Aorta (tissue), 5 donors: ENCODE measurements at regions of chr9 and their contacts with region 1.

Region 1: GRCh38 chr9:4489919-4490704 is at the start of gene SLC1A1:
- DNase-seq: peak; percentile 85 to 88
- ATAC-seq: peak; percentile 93
- H3K4me3 ChIP-seq: peak within 1 kb of the TSS; percentile 33 to 58
- H3K27ac ChIP-seq: peak within 1 kb of the TSS; percentile 21 to 61
- H3K4me1 ChIP-seq: no peaks in the 10 kb centered on the region
- H3K27me3 ChIP-seq: no peaks in the 10 kb centered on the region
- total RNA-seq, gene SLC1A1: 3.0 to 3.2 TPM

Region 2: DNA sequence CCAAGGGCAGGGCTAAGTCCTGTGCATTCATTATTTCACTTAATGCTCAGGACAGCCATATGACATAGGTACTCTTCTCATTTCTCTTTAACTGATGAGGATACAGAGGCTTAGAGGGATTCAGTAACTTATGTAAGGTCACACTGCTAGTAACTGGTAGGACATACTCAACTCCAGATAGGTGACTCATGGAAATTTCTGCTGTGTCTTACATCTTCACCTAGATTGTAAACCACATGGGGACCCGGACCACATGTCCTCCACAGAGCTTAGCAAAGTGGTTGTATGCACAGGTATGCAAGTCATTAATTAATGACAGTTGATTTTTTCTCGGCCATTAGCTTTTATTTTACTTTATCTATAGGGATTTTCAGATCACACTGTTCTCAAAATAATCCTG is 29.5 kb after region 1 on chr9:
- intact Hi-C with region 1: no loop called
- DNase-seq: no peak
- ATAC-seq: no peak
- H3K4me3 ChIP-seq: no peak overlapping the region
- H3K27ac ChIP-seq: no peak overlapping the region
- H3K4me1 ChIP-seq: no peaks in the 10 kb centered on the region
- H3K27me3 ChIP-seq: no peaks in the 10 kb centered on the region

Region 3: GRCh38 chr9:4548811-4549725 is 59.0 kb after region 1 on chr9:
- intact Hi-C with region 1: loop called in 1 of 2 experiments (anchors 10 kb)
- DNase-seq: no peak
- ATAC-seq: no peak
- H3K4me3 ChIP-seq: no peak overlapping the region
- H3K27ac ChIP-seq: no peak overlapping the region
- H3K4me1 ChIP-seq: no peaks in the 10 kb centered on the region
- H3K27me3 ChIP-seq: no peaks in the 10 kb centered on the region